ENCODE measurements at regions of chr19 and their contacts with region 1.

Region 1: DNA sequence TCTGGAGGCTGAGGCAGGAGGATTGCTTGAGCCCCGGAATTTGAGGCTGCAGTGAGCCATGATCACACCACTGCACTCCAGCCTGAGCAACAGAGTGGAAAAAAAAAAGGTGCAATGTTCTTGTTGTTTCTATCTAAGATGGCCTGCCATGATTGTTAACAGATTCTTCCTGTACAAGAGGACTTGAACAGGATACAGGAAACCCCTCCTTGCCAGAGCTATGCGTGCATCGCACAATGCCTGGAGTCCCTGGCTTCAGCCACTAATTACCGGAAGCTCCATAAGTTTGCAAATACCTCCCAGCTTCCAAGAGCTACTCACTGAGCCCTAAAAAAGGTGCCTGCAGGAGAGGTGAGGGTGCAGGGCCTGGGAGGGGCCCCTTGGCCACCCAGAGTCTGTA is 13.1 kb upstream of the HIF3A start:
- DNase-seq: no peak
- H3K4me3 Mint-ChIP-seq: no peak overlapping the region
- H3K27ac Mint-ChIP-seq: no peak overlapping the region
- H3K4me1 Mint-ChIP-seq: no peaks in the 10 kb centered on the region
- H3K27me3 Mint-ChIP-seq: peaks cover 10% of the 10 kb centered on the region

Region 2: GRCh38 chr19:46271481-46272197 is 12.1 kb before region 1 on chr19:
- CTCF ChIA-PET with region 1: interaction called, 23 read pairs
- POLR2A ChIA-PET with region 1: no interaction called
- intact Hi-C with region 1: no loop called
- DNase-seq: peak; percentile 20
- H3K4me3 Mint-ChIP-seq: no peak overlapping the region
- H3K27ac Mint-ChIP-seq: no peak overlapping the region
- H3K4me1 Mint-ChIP-seq: peaks cover 7% of the 10 kb centered on the region
- H3K27me3 Mint-ChIP-seq: peaks cover 44% of the 10 kb centered on the region

Region 3: GRCh38 chr19:46431824-46432223 is 148.1 kb after region 1 on chr19:
- CTCF ChIA-PET with region 1: no interaction called
- POLR2A ChIA-PET with region 1: no interaction called
- intact Hi-C with region 1: no loop called
- DNase-seq: no peak
- H3K4me3 Mint-ChIP-seq: no peak overlapping the region
- H3K27ac Mint-ChIP-seq: no peak overlapping the region
- H3K4me1 Mint-ChIP-seq: peaks cover 25% of the 10 kb centered on the region
- H3K27me3 Mint-ChIP-seq: peaks cover 55% of the 10 kb centered on the region